ENCODE measurements at regions of chr1 and their contacts with region 1.

Region 1: DNA sequence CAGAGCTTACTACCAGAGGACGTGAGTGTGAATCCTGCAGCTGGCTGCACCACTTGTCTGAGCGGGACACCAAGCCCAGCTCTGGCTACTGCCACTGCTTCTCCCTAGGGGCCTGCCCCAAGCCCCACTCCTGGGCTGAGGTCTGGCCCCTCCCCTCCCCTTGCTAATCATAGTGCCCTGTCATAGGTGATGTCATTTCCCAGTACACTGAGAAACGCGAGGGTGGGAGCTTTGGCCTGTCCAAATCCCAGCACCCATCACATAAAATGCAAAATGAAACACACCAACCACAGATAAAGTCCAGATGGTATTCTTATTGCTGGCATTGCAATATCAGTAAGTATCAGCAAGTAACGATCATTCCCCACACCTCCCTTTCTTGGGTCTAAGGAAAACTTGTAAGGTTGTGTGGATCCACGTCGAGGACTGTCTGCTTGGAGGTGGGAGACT is 77.7 kb downstream of the TOMM20 start:
- DNase-seq: peak in 1 of 14 experiments; percentile 31
- ATAC-seq: no peak
- H3K4me3 ChIP-seq: no peak overlapping the region
- H3K4me3 Mint-ChIP-seq: no peak overlapping the region
- H3K27ac ChIP-seq: no peak overlapping the region
- H3K27ac Mint-ChIP-seq: no peak overlapping the region
- H3K4me1 ChIP-seq: peaks cover 15% of the 10 kb centered on the region
- H3K4me1 Mint-ChIP-seq: peaks cover 7% of the 10 kb centered on the region
- H3K27me3 ChIP-seq: no peaks in the 10 kb centered on the region
- H3K27me3 Mint-ChIP-seq: no peaks in the 10 kb centered on the region
- CTCF ChIP-seq: no peak

Region 2: GRCh38 chr1:234907940-234908405 is 143.0 kb before region 1 on chr1:
- CTCF ChIA-PET with region 1: no interaction called
- POLR2A ChIA-PET with region 1: no interaction called
- intact Hi-C with region 1: loop called in 1 of 2 experiments (anchors 5 kb)
- DNase-seq: no peak
- ATAC-seq: no peak
- H3K4me3 ChIP-seq: no peak overlapping the region
- H3K4me3 Mint-ChIP-seq: no peak overlapping the region
- H3K27ac ChIP-seq: no peak overlapping the region
- H3K27ac Mint-ChIP-seq: no peak overlapping the region
- H3K4me1 ChIP-seq: peaks cover 20% of the 10 kb centered on the region
- H3K4me1 Mint-ChIP-seq: peaks cover 27% of the 10 kb centered on the region
- H3K27me3 ChIP-seq: no peaks in the 10 kb centered on the region
- H3K27me3 Mint-ChIP-seq: no peaks in the 10 kb centered on the region
- CTCF ChIP-seq: no peak